Mucosa of descending colon (tissue), 3 donors: ENCODE measurements at regions of chr20 and their contacts with region 1.

Region 1: GRCh38 chr20:9978397-9979004 is 56.3 kb upstream of the ANKEF1 start:
- DNase-seq: peak in 1 of 3 donors; percentile 71
- ATAC-seq: peak; percentile 85
- H3K4me3 ChIP-seq: no peak overlapping the region
- H3K4me1 ChIP-seq: no peaks in the 10 kb centered on the region
- CTCF ChIP-seq: peak; percentile 42

Region 2: DNA sequence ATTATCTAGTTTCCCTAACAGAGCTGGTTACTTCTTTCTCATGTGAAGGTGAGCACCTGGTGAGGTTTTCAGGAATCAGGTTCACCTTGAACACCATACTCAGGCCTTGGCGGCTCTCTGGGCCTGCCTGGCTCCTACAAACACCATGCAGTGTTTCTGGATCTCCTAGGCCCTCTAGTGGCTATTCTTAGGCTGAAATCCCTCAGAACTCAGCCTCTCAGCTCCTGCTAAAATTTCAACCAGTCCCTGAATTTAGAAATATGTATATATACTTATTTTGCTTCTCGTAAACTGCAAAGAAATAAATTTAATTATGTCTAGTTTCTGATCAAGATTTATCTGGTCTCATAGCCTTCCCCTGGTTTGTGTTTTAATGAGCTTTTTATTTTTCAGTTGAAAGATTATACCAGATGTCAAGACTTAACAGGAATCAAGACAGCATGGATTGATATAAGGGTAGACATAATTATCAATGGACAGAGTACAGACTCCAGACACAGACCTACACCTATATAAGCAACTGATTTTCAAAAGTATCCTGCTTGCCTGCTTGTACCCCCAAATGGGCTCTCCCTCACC is 112.2 kb after region 1 on chr20:
- intact Hi-C with region 1: loop called (anchors 2 to 10 kb)
- DNase-seq: peak in 2 of 3 donors; percentile 32 to 69
- ATAC-seq: peak; percentile 89
- H3K4me3 ChIP-seq: no peak overlapping the region
- H3K4me1 ChIP-seq: no peaks in the 10 kb centered on the region
- CTCF ChIP-seq: peak; percentile 50

Region 3: GRCh38 chr20:10412591-10413408 is 434.3 kb after region 1 on chr20:
- intact Hi-C with region 1: loop called in 1 of 2 experiments (anchors 10 kb)
- DNase-seq: no peak
- ATAC-seq: no peak
- H3K4me3 ChIP-seq: no peak overlapping the region
- H3K4me1 ChIP-seq: no peaks in the 10 kb centered on the region
- CTCF ChIP-seq: no peak

Region 4: DNA sequence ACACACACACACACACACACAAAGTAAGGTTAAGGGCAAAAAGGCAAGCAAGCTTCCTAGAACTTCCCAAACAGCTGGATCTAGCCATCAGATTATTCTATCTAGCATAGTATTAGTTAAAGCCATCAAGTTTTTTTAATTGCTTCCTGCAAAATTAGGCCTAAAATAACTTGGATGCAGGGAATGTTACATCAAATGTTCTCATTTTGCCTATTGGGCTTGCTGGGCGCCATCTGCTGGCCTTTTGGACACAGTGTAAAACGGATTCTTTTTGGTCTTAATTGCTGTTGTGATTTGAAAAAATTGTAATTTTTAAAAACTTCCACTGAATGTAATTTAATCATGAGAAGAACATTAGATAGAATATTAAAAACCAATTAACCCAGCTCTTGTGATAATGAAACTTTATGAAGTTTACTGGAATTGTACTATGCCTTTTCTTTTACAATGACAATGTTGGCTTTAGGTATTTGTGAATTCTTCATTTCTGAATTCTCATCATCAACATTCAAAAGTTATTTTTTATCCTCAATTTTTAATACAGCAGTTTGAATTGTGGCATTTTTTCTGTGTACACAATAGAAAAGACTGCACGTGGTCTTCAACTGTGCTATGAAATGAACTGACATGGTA is 448.7 kb after region 1 on chr20:
- intact Hi-C with region 1: loop called in 1 of 2 experiments (anchors 10 kb)
- DNase-seq: peak in 2 of 3 donors; percentile 42 to 74
- ATAC-seq: peak; percentile 38
- H3K4me3 ChIP-seq: no peak overlapping the region
- H3K4me1 ChIP-seq: peaks cover 39% of the 10 kb centered on the region
- CTCF ChIP-seq: peak; percentile 68